ENCODE measurements at regions of chr9 and their contacts with region 1.

Region 1: DNA sequence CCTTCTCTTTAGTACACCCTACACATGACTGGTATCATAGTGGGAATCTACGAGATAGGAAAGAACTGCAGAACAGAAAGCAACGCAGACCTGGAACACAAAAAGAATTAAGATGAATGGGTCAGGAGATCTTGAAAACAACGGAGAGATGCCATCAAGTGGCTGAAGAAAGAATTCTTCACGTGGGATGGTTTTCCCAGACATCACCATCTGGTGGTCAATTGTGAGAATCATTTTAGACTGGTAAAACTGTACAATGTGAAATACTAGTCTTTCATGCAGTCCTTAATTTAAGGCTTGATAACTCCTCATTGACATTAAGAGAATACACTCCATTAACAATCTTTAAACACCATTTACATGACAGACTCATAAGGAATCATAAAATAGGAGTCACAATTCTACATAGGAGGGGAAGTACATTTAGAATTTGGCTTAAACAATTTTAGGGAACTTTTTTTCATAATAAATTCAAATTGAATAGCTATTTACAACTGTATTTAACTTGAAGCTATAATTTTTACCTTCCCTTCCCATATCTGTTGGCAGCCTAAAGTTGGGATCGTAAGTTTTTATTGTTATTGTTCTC is 128.4 kb upstream of the TRPM3 start:
- DNase-seq: peak; percentile 23 to 54 (median 36)
- ATAC-seq: peak; percentile 79
- H3K4me3 ChIP-seq: no peak overlapping the region
- H3K27ac ChIP-seq: no peak overlapping the region
- H3K4me1 ChIP-seq: no peaks in the 10 kb centered on the region
- H3K27me3 ChIP-seq: no peaks in the 10 kb centered on the region
- CTCF ChIP-seq: peak; percentile 66 to 98 (median 97)
- EP300 ChIP-seq: no peak
- POLR2A ChIP-seq: no peak
- RAD21 ChIP-seq: peak; percentile 54 to 70; a peak in 3 of 4 replicates

Region 2: GRCh38 chr9:70553707-70554673 is 695.8 kb before region 1 on chr9:
- CTCF ChIA-PET with region 1: no interaction called
- POLR2A ChIA-PET with region 1: no interaction called
- in situ Hi-C with region 1: no loop called
- intact Hi-C with region 1: no loop called
- DNase-seq: no peak
- ATAC-seq: no peak
- H3K4me3 ChIP-seq: no peak overlapping the region
- H3K27ac ChIP-seq: no peak overlapping the region
- H3K4me1 ChIP-seq: no peaks in the 10 kb centered on the region
- H3K27me3 ChIP-seq: peaks cover 0 to 7% of the 10 kb centered on the region in 2 experiments; a peak in 2 of 5 replicates
- CTCF ChIP-seq: no peak
- EP300 ChIP-seq: no peak
- POLR2A ChIP-seq: no peak
- RAD21 ChIP-seq: no peak

Region 3: GRCh38 chr9:70924895-70925547 is 324.8 kb before region 1 on chr9:
- CTCF ChIA-PET with region 1: interaction called, 9 read pairs
- POLR2A ChIA-PET with region 1: no interaction called
- in situ Hi-C with region 1: no loop called
- intact Hi-C with region 1: loop called (anchors 1 kb)
- DNase-seq: peak; percentile 7 to 37 (median 14)
- ATAC-seq: peak; percentile 79
- H3K4me3 ChIP-seq: no peak overlapping the region
- H3K27ac ChIP-seq: no peak overlapping the region
- H3K4me1 ChIP-seq: no peaks in the 10 kb centered on the region
- H3K27me3 ChIP-seq: no peaks in the 10 kb centered on the region
- CTCF ChIP-seq: peak; percentile 55 to 64 (median 57)
- EP300 ChIP-seq: no peak
- POLR2A ChIP-seq: no peak
- RAD21 ChIP-seq: peak; percentile 45 to 66

Region 4: DNA sequence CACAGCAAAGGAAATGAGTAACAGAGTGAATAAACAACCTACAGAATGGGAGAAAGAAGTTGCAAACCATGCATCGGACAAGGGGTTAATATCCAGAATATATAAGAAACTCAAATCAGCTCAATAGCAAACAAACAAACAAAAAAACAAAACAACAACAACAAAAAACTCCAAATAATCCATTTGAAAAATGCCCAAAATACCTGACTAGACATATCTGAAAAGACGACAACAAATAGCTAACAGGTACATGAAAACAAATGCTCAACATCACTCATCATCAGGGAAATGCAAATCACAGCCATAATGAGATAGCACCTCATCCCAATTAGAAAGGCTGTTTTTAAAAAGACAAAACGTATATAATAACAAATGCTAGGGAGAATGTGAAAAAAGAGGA is 239.6 kb before region 1 on chr9:
- CTCF ChIA-PET with region 1: no interaction called
- POLR2A ChIA-PET with region 1: no interaction called
- in situ Hi-C with region 1: no loop called
- intact Hi-C with region 1: loop called (anchors 5 kb)
- DNase-seq: no peak
- ATAC-seq: no peak
- H3K4me3 ChIP-seq: no peak overlapping the region
- H3K27ac ChIP-seq: no peak overlapping the region
- H3K4me1 ChIP-seq: no peaks in the 10 kb centered on the region
- H3K27me3 ChIP-seq: no peaks in the 10 kb centered on the region
- CTCF ChIP-seq: no peak
- EP300 ChIP-seq: no peak
- POLR2A ChIP-seq: no peak
- RAD21 ChIP-seq: no peak

Measured in K562 (cell line).